Ovary (tissue), 10 donors: ENCODE measurements at regions of chr10 and their contacts with region 1.

Region 1: DNA sequence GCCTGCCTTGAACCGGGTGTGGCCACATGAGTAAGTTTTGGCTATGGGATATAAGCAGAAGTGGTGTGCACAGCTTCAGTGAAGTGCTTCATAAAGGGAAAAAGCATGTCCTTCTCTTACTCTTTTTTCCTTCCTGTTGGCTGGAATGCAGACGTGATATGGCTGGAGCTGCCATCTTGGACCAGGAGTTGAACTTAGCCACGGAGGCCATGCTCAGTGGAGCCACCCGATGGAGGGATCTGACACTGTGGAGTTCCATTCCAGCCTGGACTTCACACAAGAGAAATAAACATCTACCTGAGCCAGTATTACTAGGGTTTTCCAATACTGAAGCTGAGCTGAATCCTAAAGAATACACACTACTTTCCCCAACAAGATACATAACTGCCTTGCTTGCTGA is 52.3 kb downstream of the CCDC3 start:
- DNase-seq: no peak
- H3K4me3 ChIP-seq: no peak overlapping the region
- H3K27ac ChIP-seq: no peak overlapping the region
- H3K4me1 ChIP-seq: no peaks in the 10 kb centered on the region
- H3K27me3 ChIP-seq: no peaks in the 10 kb centered on the region
- CTCF ChIP-seq: no peak
- EP300 ChIP-seq: no peak
- POLR2A ChIP-seq: no peak

Region 2: DNA sequence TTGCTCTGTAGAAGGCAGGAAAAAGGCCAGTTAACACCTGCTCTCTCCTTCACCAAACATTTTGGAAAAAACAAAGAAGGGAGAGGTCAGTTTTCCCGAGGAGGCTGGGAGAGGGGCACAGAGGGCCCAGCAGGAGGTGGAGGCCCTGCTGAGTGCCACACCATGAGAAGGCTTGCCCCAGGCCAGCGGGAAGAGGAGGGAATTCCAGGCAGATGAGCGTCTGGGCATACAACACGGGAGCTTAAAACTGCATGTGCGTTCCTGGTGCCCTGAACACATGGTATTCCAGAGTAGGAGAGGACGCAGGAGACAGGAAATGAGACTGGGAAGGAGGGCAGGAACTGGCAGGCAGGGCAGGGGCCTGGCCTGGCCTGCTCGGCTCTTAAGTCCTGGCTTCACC is 130.2 kb before region 1 on chr10:
- intact Hi-C with region 1: no loop called
- DNase-seq: no peak
- H3K4me3 ChIP-seq: no peak overlapping the region
- H3K27ac ChIP-seq: no peak overlapping the region
- H3K4me1 ChIP-seq: peaks cover 7% of the 10 kb centered on the region
- H3K27me3 ChIP-seq: no peaks in the 10 kb centered on the region
- CTCF ChIP-seq: no peak
- EP300 ChIP-seq: no peak
- POLR2A ChIP-seq: no peak

Region 3: GRCh38 chr10:13284050-13284449 is 334.8 kb after region 1 on chr10:
- intact Hi-C with region 1: loop called in 1 of 4 experiments (anchors 5 kb)
- DNase-seq: no peak
- H3K4me3 ChIP-seq: no peak overlapping the region
- H3K27ac ChIP-seq: no peak overlapping the region
- H3K4me1 ChIP-seq: no peaks in the 10 kb centered on the region
- H3K27me3 ChIP-seq: no peaks in the 10 kb centered on the region
- CTCF ChIP-seq: no peak
- EP300 ChIP-seq: no peak
- POLR2A ChIP-seq: no peak